ENCODE measurements at regions of chr1 and their contacts with region 1.

Region 1: GRCh38 chr1:32933742-32934322 is 30.8 kb downstream of the RNF19B start:
- DNase-seq: no peak
- H3K4me3 ChIP-seq: no peak overlapping the region
- H3K27me3 ChIP-seq: no peaks in the 10 kb centered on the region
- CTCF ChIP-seq: no peak

Region 2: DNA sequence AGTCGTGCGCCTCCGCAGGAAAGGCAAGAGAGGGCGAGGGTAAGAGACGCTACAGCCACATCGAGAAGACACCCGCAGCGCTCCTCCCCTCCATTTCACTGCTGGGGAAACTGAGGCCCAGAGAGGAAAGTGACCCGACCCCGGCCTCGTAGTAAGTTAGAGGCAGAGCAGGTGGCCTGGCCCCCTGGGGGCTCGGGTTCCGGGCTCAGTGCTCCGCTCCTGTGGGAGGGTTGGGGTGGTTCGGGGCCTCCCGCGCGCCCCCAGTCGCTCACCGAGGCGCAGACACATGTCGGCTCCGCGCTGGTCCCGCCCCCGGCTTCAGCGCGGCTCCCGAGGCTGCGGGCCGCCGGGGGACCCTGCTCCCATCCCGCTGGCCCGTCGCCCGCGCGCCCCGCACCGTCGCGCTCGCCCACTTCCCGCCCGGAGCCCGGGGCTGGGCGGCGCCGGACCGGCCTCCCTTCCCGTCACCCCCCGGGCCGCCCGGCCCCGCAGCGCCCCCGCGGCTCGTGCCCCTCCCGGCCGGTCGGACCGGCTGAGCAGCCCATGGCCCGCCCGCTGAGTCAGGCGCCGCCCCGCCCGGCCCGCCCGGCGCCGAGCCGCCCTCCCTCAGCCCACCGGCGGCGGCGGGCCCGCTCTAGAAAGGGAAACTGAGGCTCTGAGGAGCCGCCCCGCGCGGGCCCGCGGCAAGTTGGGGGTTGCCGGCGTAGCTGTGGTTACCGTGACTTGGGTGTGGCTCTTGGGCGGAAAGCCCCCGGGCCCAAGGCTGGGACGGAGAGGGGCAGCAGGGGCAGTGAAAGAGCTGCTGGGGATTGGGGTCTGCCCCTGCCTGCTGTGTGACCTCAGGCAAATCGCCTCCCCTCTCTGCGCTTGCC is 32.6 kb before region 1 on chr1 and contains the start of gene TMEM54:
- CTCF ChIA-PET with region 1: no interaction called
- POLR2A ChIA-PET with region 1: no interaction called
- DNase-seq: no peak
- H3K4me3 ChIP-seq: peak within 1 kb of the TSS; percentile 62
- H3K27me3 ChIP-seq: no peaks in the 10 kb centered on the region; the same call in 1 of the 2 replicates
- CTCF ChIP-seq: no peak
- polyA plus RNA-seq, gene TMEM54: 19.1 and 34.9 TPM in 2 replicates

Region 3: DNA sequence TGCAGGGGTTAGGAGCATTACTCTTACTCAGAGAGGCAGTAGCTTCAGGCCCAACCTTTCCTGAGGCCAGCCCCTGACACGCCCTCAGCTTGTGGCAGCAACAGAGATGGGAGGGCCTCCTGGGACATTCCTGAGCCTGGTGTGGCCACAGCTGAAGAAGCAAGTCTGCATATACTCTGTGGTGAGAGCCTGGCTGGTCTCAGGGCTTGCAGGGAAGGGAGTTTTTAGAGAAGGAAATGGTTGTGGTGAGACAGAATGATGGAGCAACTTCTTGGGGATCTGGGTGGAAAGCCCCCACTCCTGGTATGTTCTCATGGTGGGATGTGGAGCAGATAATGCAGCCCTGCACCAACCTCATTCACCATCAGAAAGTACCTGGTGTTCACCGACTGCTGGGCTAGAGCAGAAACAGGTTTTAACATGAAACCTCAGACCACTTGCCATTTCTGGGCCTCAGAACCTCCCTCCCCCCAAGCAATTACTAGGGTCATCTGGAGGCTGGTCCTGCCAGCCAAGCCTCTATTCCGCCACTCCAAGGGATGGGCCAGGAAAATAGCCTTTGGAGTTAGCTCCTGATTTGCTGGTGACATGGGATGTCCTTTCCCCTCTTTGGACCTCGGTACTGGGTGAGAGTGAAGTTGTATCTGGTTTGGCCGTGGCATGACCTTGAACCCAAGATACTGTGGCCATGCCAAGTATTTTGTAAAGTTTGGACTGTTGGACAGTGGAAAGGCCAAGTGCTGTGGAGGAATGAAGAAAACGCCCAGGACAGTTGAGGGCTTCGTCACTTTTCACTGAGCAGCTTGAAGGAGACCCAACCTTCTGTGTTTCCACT is 58.9 kb after region 1 on chr1:
- CTCF ChIA-PET with region 1: interaction called, 21 read pairs
- POLR2A ChIA-PET with region 1: no interaction called
- DNase-seq: peak; percentile 87
- H3K4me3 ChIP-seq: no peak overlapping the region
- H3K27me3 ChIP-seq: no peaks in the 10 kb centered on the region
- CTCF ChIP-seq: no peak

Region 4: DNA sequence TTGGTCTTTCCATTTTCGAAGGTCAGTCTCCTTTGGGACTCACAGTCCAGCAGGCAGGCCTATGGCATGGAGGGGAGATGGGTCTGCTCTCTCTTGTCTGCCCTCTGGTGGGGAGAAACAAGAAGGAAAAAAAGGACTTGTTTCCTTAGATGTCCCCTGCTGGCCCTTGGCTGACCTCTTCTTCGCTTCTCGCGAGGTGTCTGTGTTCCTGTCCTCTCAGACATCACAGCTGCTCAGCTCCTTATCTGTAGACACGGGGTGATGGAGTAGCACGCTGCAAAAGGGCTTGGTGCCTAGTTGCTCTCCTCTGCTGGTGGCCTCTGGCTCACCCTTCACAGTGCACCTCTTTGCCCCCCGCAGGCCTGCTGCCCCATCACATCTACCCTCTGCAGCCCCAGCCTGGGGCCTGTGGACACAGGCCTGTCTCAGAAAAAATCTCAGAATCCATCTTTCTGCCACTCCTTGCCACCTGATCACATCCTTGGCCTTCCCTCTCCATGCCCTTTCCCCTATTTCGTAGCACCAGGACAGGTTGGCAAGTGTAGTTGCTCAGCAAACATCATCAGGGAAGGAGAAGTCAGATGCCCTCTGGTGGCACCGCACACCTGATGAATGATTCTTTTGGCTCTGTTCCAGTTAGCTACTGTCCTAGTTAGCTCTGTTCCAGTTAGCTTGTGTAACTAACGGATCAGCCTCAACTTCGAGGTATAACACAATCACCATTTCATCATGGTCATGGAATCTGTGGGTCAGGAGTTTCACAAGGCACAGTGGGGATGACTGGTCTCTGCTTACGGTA is 121.6 kb after region 1 on chr1:
- CTCF ChIA-PET with region 1: interaction called, 96 read pairs
- POLR2A ChIA-PET with region 1: no interaction called
- DNase-seq: no peak
- H3K4me3 ChIP-seq: no peak overlapping the region
- H3K27me3 ChIP-seq: no peaks in the 10 kb centered on the region
- CTCF ChIP-seq: peak; percentile 79

Region 5: DNA sequence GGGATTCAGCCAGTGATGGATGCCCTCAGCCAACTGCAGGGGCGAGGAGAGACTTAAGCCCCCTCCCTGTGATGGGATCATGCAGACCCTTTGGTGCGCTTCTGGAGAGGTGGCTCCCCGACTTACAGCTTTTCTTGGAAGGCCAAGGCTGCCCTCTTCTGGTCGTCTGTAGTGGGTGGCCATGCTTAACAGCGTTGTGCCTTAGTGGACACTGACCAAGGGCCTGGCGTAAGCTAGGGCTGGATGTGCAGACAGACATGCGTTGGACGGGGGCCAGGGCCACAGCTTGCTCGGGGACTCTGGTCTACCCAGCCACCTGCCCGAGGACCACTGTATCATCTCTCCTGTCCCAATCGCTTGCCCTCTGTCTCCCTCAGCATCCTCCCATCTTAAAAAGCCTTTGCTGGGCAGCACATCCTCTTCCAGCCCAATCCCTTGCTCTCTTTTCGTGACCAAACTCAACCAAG is 152.6 kb after region 1 on chr1:
- CTCF ChIA-PET with region 1: interaction called, 47 read pairs
- POLR2A ChIA-PET with region 1: no interaction called
- DNase-seq: no peak
- H3K4me3 ChIP-seq: no peak overlapping the region
- H3K27me3 ChIP-seq: no peaks in the 10 kb centered on the region
- CTCF ChIP-seq: peak; percentile 87

Measured in BJ (cell line).